GM13977 (cell line): ENCODE measurements at regions of chr10 and their contacts with region 1.

Region 1: DNA sequence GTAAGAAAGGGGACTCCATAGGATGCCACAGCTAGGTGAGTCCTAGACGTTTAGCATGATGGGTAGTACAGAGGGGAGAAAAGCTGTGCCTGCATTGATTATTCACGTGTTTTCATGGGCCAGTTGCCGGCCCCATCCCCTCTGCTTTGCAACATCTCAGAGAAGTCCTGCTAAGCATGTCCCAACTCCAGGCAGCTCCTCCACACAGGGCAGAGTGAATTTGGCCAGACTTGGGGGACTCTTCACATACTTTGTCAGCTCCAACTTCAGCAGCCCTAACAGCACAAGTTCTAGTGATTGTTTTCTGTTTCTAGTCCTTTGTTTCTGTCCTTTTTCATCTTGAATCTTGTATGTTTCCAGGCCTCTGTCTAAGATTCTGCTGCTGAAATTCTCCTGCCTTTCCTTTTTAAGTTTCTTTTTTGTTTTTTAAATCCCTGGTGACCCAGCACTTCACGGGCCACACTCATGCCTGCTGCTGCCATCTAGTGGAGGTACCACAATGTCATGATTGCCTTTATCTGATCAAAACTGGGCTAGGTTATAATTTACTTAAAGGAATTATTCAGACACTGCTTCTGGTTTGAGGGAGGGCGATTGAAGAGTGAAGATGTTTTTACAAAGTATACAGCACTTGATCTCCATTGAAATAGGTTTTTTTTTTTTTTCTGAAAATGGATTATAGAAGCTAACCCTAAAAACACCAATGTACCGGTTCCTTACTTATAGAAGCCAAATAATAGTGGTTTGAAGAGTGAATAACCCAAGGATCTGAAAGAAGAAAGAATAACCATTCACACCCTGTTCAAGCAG is 276.9 kb downstream of the CSTF2T start:
- DNase-seq: peak; percentile 23
- CTCF ChIP-seq: peak; percentile 71

Region 2: DNA sequence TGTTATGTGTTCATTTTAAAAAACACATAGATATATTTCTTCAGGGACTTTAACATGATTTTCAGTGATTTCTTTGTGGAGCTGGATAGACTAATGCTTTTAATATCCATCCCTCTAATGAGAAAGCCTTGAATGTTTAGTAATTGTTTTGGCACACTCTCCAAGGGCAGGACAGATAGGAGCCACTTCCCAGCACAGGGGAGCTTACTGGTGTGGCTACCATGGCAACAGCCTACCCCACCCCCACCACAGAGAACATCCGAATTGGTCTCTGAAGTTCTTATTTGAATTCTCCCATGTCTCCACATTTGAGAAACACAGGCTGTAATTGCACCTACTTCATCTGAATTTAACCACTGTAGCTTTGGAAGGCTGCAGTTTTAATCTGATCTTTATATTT is 260.5 kb before region 1 on chr10:
- in situ Hi-C with region 1: no loop called
- DNase-seq: no peak
- CTCF ChIP-seq: no peak

Region 3: GRCh38 chr10:51224671-51225161 is 197.8 kb before region 1 on chr10:
- in situ Hi-C with region 1: no loop called
- DNase-seq: no peak
- CTCF ChIP-seq: no peak

Region 4: GRCh38 chr10:51960494-51960895 is 538.0 kb after region 1 on chr10:
- in situ Hi-C with region 1: loop called (anchors 25 kb)
- DNase-seq: peak; percentile 16
- CTCF ChIP-seq: peak; percentile 56